ENCODE measurements at regions of chr20 and their contacts with region 1.

Region 1: GRCh38 chr20:56974499-56975236 is 291.8 kb downstream of the BMP7 start:
- DNase-seq: peak; percentile 80
- ATAC-seq: peak; percentile 72
- H3K4me3 Mint-ChIP-seq: peak overlapping the region; percentile 39
- H3K27ac Mint-ChIP-seq: no peak overlapping the region
- H3K4me1 Mint-ChIP-seq: peaks cover 43% of the 10 kb centered on the region
- H3K27me3 Mint-ChIP-seq: peaks cover 28% of the 10 kb centered on the region
- CTCF ChIP-seq: peak; percentile 62

Region 2: DNA sequence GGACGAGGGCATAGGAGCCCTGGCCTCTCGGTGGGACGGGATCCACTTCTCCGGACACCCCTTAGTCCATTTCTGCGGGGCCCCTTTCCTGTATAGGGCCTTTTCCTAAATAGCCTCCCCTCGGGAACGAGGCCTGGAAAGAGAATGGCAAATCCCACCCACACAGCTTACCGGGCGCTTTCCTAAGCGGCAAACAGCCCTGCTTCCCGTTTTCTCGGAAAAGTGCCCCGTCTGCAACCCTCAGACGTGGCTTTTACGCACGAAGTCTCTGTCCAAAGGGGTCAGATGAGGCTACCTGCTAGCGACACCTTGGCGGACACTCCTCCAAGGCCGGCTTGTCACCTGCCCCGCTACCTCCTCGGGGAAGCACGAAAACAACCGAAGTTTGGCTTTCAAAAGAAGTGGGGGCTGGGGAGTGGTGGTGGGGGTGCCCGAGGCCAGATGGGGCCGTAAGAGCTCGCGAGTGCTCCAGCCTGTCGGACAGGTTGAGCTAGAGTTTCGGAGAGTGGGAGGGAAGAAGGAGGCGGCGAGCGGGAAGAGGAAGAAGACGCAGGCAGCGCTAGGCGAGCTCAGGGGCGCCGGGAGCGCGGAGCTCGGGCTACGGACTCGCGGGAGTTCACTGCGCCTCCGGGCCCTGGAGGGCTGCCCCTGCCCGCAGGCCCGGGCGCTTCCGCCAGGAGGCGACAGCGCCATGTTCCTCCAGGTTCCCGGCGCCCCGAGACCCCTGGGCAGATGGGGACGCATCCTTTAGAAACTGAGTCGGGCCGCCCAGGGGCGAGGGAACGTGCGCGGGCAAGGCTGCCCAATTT is 344.8 kb before region 1 on chr20:
- CTCF ChIA-PET with region 1: interaction called, 46 read pairs
- POLR2A ChIA-PET with region 1: no interaction called
- DNase-seq: peak; percentile 85
- ATAC-seq: peak; percentile 61
- H3K4me3 Mint-ChIP-seq: peak overlapping the region; percentile 83
- H3K27ac Mint-ChIP-seq: no peak overlapping the region
- H3K4me1 Mint-ChIP-seq: peaks cover 49% of the 10 kb centered on the region
- H3K27me3 Mint-ChIP-seq: peaks cover 70% of the 10 kb centered on the region
- CTCF ChIP-seq: peak; percentile 81

Region 3: DNA sequence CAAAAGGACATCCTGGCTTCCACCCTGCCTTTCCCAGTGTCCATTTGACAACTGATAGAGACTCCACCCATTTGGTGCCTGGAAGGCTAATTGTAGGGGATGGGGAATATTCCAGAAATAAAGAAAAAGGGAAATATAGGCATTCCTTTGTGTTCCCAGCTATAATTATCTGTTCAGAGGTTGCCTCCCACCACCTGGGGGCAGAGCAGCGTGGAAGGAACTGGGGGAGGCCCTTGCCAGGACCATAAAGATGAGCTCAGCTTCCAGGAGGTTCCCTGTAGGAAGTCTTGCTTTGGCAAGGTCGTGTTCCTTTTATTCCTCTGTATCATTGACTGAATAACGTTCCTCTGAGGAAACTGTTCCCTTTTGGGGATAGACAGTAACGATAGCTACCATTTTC is 130.9 kb before region 1 on chr20:
- CTCF ChIA-PET with region 1: interaction called, 94 read pairs
- POLR2A ChIA-PET with region 1: no interaction called
- DNase-seq: peak; percentile 52
- ATAC-seq: peak; percentile 82
- H3K4me3 Mint-ChIP-seq: no peak overlapping the region
- H3K27ac Mint-ChIP-seq: no peak overlapping the region
- H3K4me1 Mint-ChIP-seq: peaks cover 10% of the 10 kb centered on the region
- H3K27me3 Mint-ChIP-seq: peaks cover 4% of the 10 kb centered on the region; the same call in 1 of the 2 replicates
- CTCF ChIP-seq: 0 out of 2 replicates have a peak, but pooled peaks have one; percentile 22

Region 4: DNA sequence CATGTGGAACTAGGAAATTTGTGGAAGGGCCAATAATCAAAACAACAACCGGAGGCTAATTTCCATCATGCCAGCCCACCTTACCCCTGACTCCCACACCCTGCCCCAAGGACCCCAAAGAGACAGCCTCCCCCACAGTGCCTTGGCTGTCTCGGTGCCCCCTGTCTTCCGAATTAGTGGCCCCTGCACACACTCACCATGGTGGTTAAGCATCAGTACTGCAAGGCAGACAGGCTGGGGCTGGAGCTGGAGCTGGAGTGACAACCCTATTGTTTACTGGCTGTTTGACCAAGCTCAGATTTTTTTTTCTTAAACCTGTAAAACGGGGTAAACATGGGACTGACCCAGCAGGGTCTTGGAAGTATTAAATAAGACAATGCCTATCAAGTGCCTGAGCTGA is 107.5 kb before region 1 on chr20:
- CTCF ChIA-PET with region 1: interaction called, 10 read pairs
- POLR2A ChIA-PET with region 1: no interaction called
- DNase-seq: no peak
- ATAC-seq: peak; percentile 70
- H3K4me3 Mint-ChIP-seq: no peak overlapping the region
- H3K27ac Mint-ChIP-seq: no peak overlapping the region
- H3K4me1 Mint-ChIP-seq: peaks cover 12% of the 10 kb centered on the region
- H3K27me3 Mint-ChIP-seq: no peaks in the 10 kb centered on the region
- CTCF ChIP-seq: no peak

Region 5: GRCh38 chr20:56957737-56958553 is 16.7 kb before region 1 on chr20:
- CTCF ChIA-PET with region 1: interaction called, 14 read pairs
- POLR2A ChIA-PET with region 1: no interaction called
- DNase-seq: peak; percentile 36
- ATAC-seq: peak; percentile 77
- H3K4me3 Mint-ChIP-seq: no peak overlapping the region
- H3K27ac Mint-ChIP-seq: no peak overlapping the region; the same call in 1 of the 2 replicates
- H3K4me1 Mint-ChIP-seq: peaks cover 41% of the 10 kb centered on the region
- H3K27me3 Mint-ChIP-seq: no peaks in the 10 kb centered on the region
- CTCF ChIP-seq: no peak

Region 6: DNA sequence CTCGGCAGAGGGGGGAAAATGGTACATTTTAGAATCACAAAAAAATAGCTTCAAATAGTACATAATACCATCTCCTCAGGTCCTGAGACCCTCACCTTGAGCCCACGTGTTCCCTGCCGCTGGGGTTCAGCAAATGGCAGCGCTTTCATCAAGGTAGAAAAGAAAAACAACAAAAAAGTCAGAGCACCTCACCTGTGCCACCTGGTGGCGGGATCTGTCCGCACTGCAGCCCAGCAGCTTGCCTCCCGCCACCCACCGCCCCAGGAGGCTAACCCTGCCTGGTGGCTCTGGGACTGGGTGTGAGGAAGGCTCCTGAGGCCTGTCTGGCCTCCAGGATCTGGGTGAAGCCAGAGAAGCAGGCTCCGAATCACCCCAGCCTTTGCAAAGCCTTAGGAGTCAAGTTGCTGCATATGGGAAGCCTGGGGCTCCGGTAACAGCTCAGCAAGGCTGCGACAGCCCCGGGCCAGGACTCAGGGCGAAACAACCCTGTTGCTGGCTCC is 21.0 kb after region 1 on chr20:
- CTCF ChIA-PET with region 1: interaction called, 11 read pairs
- POLR2A ChIA-PET with region 1: no interaction called
- DNase-seq: peak; percentile 78
- ATAC-seq: peak; percentile 95
- H3K4me3 Mint-ChIP-seq: no peak overlapping the region
- H3K27ac Mint-ChIP-seq: no peak overlapping the region
- H3K4me1 Mint-ChIP-seq: no peaks in the 10 kb centered on the region
- H3K27me3 Mint-ChIP-seq: peaks cover 6% of the 10 kb centered on the region
- CTCF ChIP-seq: peak; percentile 70